Heart left ventricle (tissue), 16 donors: ENCODE measurements at regions of chr3 and their contacts with region 1.

Region 1: DNA sequence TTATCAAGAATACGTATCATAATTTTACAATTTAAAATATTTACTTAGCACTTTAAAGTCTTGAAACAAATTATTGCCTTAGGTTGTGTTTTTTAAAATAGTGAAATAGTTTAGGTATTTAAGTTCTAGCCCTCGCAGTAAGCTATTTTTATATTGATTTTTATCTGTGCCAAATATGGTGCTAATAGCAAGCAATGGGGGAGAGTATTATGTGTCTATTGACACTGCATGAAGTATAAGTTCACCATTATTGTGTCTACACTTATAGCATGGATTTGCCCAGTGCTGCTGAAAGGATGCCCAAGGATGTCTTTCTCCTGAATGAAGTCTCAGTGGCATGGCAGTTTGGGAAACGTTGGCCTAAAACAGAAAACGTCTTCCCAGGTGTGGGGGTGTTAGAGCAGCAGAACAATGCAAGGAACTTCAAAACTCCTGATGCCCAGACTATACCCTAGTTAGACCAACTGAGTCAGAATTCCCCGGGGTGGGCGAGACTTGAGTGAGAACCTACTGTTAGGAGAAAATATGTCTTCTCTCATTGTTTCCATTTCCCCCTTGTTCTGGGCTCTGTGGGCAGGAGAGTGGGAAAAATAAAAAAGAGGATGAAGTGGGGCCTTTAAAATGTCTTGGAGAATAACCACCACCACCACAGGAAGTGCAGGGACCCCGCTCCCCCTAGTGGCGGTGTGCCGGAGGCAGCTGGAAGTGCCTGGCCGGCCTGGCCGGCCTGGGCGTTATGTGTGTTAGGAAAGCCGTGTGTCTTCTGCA is 104.2 kb upstream of the SLC7A14 start:
- DNase-seq: peak; percentile 44 to 83 (median 59)
- ATAC-seq: peak in 3 of 4 donors; percentile 76 to 89 (median 77)
- H3K4me3 ChIP-seq: no peak overlapping the region
- H3K27ac ChIP-seq: no peak overlapping the region
- H3K4me1 ChIP-seq: peaks cover 0 to 7% (median 0%) of the 10 kb centered on the region in 12 donors
- H3K27me3 ChIP-seq: no peaks in the 10 kb centered on the region
- CTCF ChIP-seq: peak; percentile 67 to 82 (median 74)
- POLR2A ChIP-seq: no peak

Region 2: DNA sequence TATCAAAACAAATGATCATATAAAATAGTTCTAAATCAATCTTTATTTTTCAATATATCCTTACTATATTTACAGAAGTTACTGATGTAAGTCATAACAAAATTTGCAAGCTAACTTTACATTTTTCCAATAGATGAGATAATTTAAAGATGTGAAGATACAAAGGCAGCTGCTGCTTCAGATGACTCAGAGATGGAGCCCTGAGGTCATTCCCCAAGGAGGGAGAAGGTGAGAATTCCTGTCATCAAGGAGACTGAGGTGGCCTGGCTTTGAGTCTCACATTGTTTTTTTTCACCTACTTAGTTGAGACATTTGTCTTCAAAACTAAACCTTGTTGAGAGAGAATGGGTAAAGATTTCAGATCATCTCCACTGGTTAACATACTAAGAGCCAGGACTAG is 782.6 kb before region 1 on chr3:
- intact Hi-C with region 1: no loop called
- DNase-seq: no peak
- ATAC-seq: no peak
- H3K4me3 ChIP-seq: no peak overlapping the region
- H3K27ac ChIP-seq: no peak overlapping the region
- H3K4me1 ChIP-seq: peaks cover 0 to 10% (median 3%) of the 10 kb centered on the region in 12 donors
- H3K27me3 ChIP-seq: no peaks in the 10 kb centered on the region
- CTCF ChIP-seq: no peak
- POLR2A ChIP-seq: no peak

Region 3: DNA sequence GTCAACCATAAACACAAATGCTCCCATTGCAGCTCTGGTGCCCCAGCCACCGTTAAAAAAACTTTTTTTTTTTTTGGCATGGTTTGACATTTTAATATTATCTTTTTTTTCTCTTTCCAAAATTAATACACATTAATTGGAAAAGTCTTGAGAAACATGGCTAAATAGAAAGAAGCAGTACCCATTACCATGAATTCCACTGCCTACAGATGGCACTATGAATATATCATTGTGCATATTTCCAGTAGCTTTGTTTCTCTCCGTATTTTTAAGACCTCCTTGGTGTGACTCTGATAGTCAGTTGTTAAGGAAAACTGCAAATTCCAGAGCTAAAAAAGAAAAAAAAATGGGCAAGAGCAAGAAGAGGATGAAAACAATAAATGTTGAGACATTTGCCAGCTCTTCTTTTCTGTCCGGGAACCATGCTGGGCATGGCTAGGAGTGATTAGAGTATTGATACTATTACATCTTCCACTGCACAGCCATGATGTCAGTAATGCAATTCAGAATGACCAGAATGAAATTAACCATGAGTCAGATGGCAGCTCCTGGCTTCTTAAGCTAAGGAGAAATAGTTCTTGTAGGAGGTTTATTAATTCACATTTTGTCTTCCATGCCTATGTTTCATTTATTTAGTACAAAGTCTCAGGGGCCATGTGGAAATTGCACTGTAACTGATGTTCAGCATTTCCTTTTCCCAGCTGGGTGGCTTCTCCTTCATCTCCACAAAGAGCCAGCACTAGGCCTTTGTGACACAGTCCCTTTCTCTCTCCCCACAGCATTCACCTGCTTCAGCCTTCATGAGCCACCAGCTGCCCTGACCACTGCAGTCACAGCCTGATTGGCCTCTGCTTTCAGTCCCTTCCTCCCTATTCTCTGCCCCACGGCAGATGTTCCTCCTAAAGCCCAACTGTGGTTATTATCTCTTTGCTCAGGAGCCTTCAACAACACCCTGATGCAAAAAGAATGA is 136.0 kb before region 1 on chr3:
- intact Hi-C with region 1: loop called in 9 of 10 experiments (anchors 1 to 5 kb)
- DNase-seq: no peak
- ATAC-seq: peak in 1 of 4 donors; percentile 50
- H3K4me3 ChIP-seq: no peak overlapping the region
- H3K27ac ChIP-seq: no peak overlapping the region
- H3K4me1 ChIP-seq: no peaks in the 10 kb centered on the region
- H3K27me3 ChIP-seq: peaks cover 0 to 10% (median 0%) of the 10 kb centered on the region in 9 donors
- CTCF ChIP-seq: peak in 7 of 12 donors; percentile 13 to 44 (median 36)
- POLR2A ChIP-seq: no peak

Region 4: DNA sequence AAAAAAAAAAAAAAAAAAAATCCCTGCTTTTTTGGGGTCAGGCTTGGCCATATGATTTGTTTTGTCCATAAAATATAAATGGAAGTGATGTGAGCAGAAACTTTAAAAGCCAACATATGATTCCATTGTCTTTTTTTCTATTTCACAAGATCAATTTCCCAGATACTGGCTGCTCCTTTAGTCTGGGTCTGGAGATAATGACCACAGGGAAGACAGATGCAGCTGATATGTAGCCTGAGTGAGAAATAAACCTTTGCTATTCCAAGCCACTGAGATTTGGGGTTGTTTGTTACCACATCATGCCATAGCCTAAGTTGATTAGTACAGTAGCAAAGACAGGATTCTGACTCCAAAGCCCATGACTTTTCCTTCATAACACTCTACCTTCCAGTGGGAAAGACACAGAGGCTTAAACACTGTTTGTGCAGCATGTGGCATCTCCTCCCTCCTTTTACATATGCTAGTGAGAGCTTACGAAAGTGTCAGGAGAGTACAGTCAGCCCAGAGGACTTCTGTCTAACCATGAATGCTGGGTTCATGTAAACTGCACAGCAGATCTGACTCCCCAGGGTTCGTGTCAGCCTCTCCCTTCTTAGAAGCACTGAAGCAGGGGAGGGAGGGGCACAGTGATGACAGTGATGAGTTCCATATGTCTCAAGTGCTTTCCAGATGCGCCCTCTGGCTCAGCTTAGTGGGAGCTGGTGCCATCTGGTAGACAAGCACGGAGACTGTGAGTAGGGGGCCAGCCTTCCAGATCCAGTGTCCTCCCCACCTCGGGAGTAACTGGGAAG is 67.5 kb before region 1 on chr3:
- intact Hi-C with region 1: no loop called
- DNase-seq: peak in 4 of 5 donors; percentile 41 to 70 (median 48)
- ATAC-seq: peak; percentile 90 to 98 (median 94)
- H3K4me3 ChIP-seq: no peak overlapping the region
- H3K27ac ChIP-seq: no peak overlapping the region
- H3K4me1 ChIP-seq: peaks cover 0 to 18% (median 8%) of the 10 kb centered on the region in 12 donors
- H3K27me3 ChIP-seq: no peaks in the 10 kb centered on the region
- CTCF ChIP-seq: peak in 5 of 12 donors; percentile 8 to 36 (median 14)
- POLR2A ChIP-seq: no peak

Region 5: GRCh38 chr3:170780955-170781354 is 90.9 kb after region 1 on chr3:
- intact Hi-C with region 1: no loop called
- DNase-seq: no peak
- ATAC-seq: no peak
- H3K4me3 ChIP-seq: no peak overlapping the region
- H3K27ac ChIP-seq: no peak overlapping the region
- H3K4me1 ChIP-seq: no peaks in the 10 kb centered on the region
- H3K27me3 ChIP-seq: no peaks in the 10 kb centered on the region
- CTCF ChIP-seq: no peak
- POLR2A ChIP-seq: no peak